ENCODE measurements at regions of chr6 and their contacts with region 1.

Region 1: GRCh38 chr6:31143148-31143547 is 4.3 kb upstream of the PSORS1C2 start:
- DNase-seq: peak; percentile 44 to 65
- H3K4me3 ChIP-seq: no peak overlapping the region
- H3K27ac ChIP-seq: no peak overlapping the region
- H3K4me1 ChIP-seq: no peaks in the 10 kb centered on the region
- H3K27me3 ChIP-seq: no peaks in the 10 kb centered on the region
- CTCF ChIP-seq: no peak
- POLR2A ChIP-seq: no peak

Region 2: GRCh38 chr6:30990422-30991086 is 152.6 kb before region 1 on chr6:
- intact Hi-C with region 1: no loop called
- DNase-seq: no peak
- H3K4me3 ChIP-seq: no peak overlapping the region
- H3K27ac ChIP-seq: no peak overlapping the region
- H3K4me1 ChIP-seq: no peaks in the 10 kb centered on the region
- H3K27me3 ChIP-seq: no peaks in the 10 kb centered on the region
- CTCF ChIP-seq: no peak
- POLR2A ChIP-seq: no peak

Region 3: DNA sequence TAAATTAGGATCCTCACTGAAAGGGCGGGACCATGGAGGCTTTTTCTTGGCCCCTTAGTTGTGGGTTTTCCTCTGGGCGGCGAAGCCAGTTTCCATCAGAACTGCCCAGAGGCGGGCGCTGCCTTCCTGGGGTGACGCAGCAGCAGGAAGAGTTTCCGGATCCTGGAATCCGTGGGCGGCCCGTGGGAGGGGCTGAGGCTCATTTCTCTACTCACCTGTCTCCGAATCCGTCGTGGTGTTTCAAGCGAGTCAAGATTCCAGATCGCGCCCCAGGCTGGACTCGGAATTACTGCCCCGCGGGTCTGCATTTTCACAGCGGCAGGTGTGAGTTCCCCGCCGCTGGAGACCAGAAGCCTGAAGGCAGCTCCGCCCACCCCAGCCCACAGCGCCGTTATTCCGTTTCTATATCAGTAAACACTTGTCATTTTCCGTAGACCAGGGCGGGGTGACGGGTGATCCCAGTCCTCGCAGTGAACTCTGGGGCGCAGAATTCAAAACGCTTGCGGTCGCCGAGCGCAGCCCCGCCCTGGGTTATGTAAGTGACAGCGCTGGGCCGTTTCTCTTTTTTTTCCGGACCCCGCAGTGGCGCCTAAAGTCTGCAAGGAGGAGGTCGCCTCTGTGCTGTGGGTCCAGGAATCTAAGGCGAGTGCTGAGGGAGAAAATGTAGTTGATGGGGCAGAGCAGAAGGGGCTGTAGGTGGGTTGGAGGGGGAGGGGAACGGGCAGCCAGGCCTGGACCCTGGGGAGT is 54.6 kb after region 1 on chr6:
- intact Hi-C with region 1: loop called (anchors 5 kb)
- DNase-seq: peak; percentile 89 to 91
- H3K4me3 ChIP-seq: peak overlapping the region; percentile 48 to 79
- H3K27ac ChIP-seq: peak overlapping the region; percentile 92 to 95
- H3K4me1 ChIP-seq: no peaks in the 10 kb centered on the region
- H3K27me3 ChIP-seq: no peaks in the 10 kb centered on the region
- CTCF ChIP-seq: no peak
- POLR2A ChIP-seq: peak; percentile 70 to 75

Region 4: DNA sequence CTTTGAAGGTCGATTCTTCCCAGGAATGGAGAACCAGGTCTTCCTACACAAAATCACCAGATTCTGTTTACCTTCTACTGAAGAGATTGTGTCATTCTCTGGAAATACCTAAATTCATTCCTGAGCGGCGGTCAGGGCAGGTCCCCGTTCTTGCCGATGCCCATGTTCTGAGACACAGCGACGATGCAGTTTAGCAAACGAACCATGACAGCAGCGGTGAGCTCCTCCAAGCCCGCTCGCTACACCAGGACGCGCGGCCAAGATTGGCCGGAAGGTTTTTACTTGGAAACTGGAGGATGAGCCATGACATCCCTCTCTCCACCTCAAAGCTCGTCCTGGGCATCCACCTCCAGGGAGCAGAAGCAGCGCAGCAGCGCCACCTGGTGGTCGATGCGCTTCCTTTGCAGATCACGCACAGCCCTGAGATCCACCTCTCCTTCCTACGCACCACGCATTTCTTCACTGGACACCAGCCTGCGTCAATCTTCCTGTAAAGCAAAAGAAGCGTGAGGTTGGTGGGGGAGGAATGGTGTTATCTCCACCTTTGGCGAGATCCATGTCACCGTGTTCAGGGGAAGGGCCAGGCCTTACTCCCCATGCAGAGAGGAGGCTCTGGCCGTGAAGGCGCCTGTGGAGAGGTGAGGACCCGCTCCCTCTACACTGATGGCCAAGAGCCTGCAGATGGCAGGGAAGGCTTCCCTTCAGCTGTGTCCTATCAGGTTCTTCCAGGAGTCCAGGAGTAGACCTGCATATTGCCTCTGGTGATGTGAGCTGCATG is 223.7 kb after region 1 on chr6:
- intact Hi-C with region 1: loop called (anchors 5 kb)
- DNase-seq: peak; percentile 88 to 89
- H3K4me3 ChIP-seq: peak overlapping the region in 1 of 2 donors; percentile 24
- H3K27ac ChIP-seq: no peak overlapping the region
- H3K4me1 ChIP-seq: no peaks in the 10 kb centered on the region
- H3K27me3 ChIP-seq: no peaks in the 10 kb centered on the region
- CTCF ChIP-seq: peak; percentile 88 to 97 (median 92)
- POLR2A ChIP-seq: peak in 1 of 2 donors; percentile 23

Measured in uterus (tissue), 4 donors.